Gastrocnemius medialis (tissue), 4 donors: ENCODE measurements at regions of chr5 and their contacts with region 1.

Region 1: GRCh38 chr5:14142827-14143548 is at the start of gene TRIO:
- DNase-seq: peak; percentile 85 to 88
- ATAC-seq: peak; percentile 71 to 77
- H3K4me3 ChIP-seq: peak within 1 kb of the TSS; percentile 72 to 92 (median 84)
- H3K27ac ChIP-seq: peak within 1 kb of the TSS; percentile 89 to 95 (median 92)
- H3K4me1 ChIP-seq: peaks cover 29 to 48% of the 10 kb centered on the region in 2 donors
- H3K27me3 ChIP-seq: no peaks in the 10 kb centered on the region
- CTCF ChIP-seq: peak; percentile 18 to 62 (median 51)
- POLR2A ChIP-seq: peak; percentile 74 to 84
- total RNA-seq, gene TRIO: 31.5 to 57.5 (median 50.4) TPM

Region 2: GRCh38 chr5:14108170-14108996 is 34.6 kb before region 1 on chr5:
- in situ Hi-C with region 1: no loop called
- intact Hi-C with region 1: loop called (anchors 5 kb)
- DNase-seq: peak; percentile 39 to 52
- ATAC-seq: peak; percentile 85 to 90
- H3K4me3 ChIP-seq: peak overlapping the region in 1 of 4 donors; percentile 4
- H3K27ac ChIP-seq: peak overlapping the region in 1 of 4 donors; percentile 10
- H3K4me1 ChIP-seq: no peaks in the 10 kb centered on the region
- H3K27me3 ChIP-seq: no peaks in the 10 kb centered on the region
- CTCF ChIP-seq: peak; percentile 49 to 85 (median 66)
- POLR2A ChIP-seq: no peak

Region 3: GRCh38 chr5:14190194-14191164 is 47.5 kb after region 1 on chr5:
- in situ Hi-C with region 1: no loop called
- intact Hi-C with region 1: loop called (anchors 2 kb)
- DNase-seq: peak; percentile 45 to 64
- ATAC-seq: peak; percentile 92 to 93
- H3K4me3 ChIP-seq: peak overlapping the region; percentile 2 to 33 (median 20)
- H3K27ac ChIP-seq: peak overlapping the region; percentile 79 to 85 (median 82)
- H3K4me1 ChIP-seq: peaks cover 53 to 75% of the 10 kb centered on the region in 2 donors
- H3K27me3 ChIP-seq: no peaks in the 10 kb centered on the region
- CTCF ChIP-seq: no peak
- POLR2A ChIP-seq: peak in 1 of 2 donors; percentile 14

Region 4: DNA sequence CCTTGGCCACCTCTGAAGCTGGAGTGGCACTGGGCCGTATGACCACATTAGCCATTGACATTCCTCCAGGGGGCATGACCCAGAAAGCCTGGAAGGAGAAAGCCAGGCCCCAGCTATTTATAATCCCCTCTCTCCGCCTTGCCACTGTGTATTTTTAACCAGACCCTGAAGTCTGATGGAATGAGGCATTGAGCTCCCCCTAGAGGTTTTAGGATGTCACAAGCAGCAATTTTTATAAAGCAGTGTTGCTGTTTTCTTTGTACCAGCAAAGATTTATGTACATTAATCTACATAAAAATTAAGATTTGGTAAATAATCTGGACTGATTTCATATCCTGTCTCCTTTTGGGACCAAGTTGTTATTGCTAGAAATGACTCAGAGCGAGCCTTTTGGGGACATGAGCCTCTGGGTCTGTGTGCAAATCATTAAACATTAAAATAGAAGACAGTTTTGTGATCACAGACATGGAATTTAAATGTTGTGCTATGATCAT is 127.3 kb after region 1 on chr5:
- in situ Hi-C with region 1: no loop called
- intact Hi-C with region 1: loop called (anchors 1 kb)
- DNase-seq: peak; percentile 40 to 81
- ATAC-seq: peak; percentile 85 to 91
- H3K4me3 ChIP-seq: no peak overlapping the region
- H3K27ac ChIP-seq: peak overlapping the region; percentile 64 to 85 (median 78)
- H3K4me1 ChIP-seq: peaks cover 31 to 37% of the 10 kb centered on the region in 2 donors
- H3K27me3 ChIP-seq: no peaks in the 10 kb centered on the region
- CTCF ChIP-seq: peak; percentile 76 to 85 (median 81)
- POLR2A ChIP-seq: no peak